IMR-90 (cell line): ENCODE measurements at regions of chr10 and their contacts with region 1.

Region 1: GRCh38 chr10:79938728-79939406 is 10.0 kb downstream of the SFTPD start:
- DNase-seq: no peak
- ATAC-seq: no peak
- H3K4me3 ChIP-seq: no peak overlapping the region
- H3K27ac ChIP-seq: no peak overlapping the region
- H3K4me1 ChIP-seq: no peaks in the 10 kb centered on the region
- H3K27me3 ChIP-seq: peaks cover 25% of the 10 kb centered on the region
- CTCF ChIP-seq: no peak
- POLR2A ChIP-seq: no peak
- RAD21 ChIP-seq: no peak

Region 2: DNA sequence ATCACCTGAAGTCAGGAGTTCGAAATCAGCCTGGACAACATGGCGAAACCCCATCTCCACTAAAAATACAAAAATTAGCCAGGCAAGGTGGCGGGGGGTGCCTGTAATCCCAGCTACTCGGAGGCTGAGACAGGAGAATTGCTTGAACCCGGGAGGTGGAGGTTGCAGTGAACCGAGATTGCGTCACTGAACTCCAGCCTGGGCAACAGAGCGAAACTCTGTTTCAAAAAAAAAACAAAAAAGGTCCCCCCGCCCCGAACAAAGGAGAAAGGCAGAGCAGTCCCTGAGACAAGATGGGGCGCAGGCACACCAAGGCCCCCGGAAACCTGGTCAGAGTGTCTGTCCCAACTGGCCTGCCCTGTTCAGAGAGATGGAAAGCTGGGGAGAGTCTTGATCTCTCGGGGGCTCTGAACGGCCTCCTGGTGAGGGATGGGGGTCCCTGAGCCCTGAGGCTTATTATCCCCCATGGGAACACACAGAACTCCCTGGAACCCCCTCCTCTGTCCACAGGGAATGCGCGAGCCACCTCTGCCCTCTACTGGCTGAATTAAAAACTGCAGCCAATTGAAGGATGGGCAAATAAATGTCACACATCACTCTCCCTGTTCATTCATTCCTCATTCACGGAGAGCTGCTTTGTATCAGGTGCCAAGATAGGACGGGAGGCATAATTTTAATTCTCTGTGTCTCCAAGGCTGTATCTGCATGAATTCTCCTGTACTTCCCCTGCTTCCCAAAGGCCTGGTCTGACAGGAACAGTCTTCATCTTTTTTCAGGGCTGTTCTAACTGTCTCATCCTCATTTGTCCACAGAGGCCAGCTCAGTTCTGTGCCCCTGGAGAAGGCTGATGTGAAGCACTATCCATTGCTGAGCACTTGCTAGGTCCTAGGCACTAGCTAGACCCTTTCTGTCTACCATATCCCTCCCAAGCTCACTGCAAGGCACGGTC is 321.7 kb after region 1 on chr10:
- CTCF ChIA-PET with region 1: no interaction called
- POLR2A ChIA-PET with region 1: no interaction called
- dilution Hi-C with region 1: no loop called
- in situ Hi-C with region 1: loop called (anchors 10 kb)
- intact Hi-C with region 1: no loop called
- DNase-seq: no peak
- ATAC-seq: peak; percentile 89
- H3K4me3 ChIP-seq: no peak overlapping the region
- H3K27ac ChIP-seq: no peak overlapping the region
- H3K4me1 ChIP-seq: no peaks in the 10 kb centered on the region
- H3K27me3 ChIP-seq: peaks cover 14% of the 10 kb centered on the region; the same call in 1 of the 2 replicates
- CTCF ChIP-seq: peak; percentile 78
- POLR2A ChIP-seq: no peak
- RAD21 ChIP-seq: peak; percentile 72